ENCODE measurements at regions of chr15 and their contacts with region 1.

Region 1: GRCh38 chr15:65530314-65531122 is at the start of gene HACD3:
- DNase-seq: peak; percentile 77
- ATAC-seq: peak; percentile 81
- H3K4me3 ChIP-seq: peak within 1 kb of the TSS; percentile 95
- H3K27ac ChIP-seq: peak within 1 kb of the TSS; percentile 39; the same call in 1 of the 2 replicates
- H3K4me1 ChIP-seq: peaks cover 25% of the 10 kb centered on the region
- H3K27me3 ChIP-seq: no peaks in the 10 kb centered on the region
- CTCF ChIP-seq: no peak
- total RNA-seq, gene HACD3: 53.0 and 64.9 TPM in 2 replicates

Region 2: DNA sequence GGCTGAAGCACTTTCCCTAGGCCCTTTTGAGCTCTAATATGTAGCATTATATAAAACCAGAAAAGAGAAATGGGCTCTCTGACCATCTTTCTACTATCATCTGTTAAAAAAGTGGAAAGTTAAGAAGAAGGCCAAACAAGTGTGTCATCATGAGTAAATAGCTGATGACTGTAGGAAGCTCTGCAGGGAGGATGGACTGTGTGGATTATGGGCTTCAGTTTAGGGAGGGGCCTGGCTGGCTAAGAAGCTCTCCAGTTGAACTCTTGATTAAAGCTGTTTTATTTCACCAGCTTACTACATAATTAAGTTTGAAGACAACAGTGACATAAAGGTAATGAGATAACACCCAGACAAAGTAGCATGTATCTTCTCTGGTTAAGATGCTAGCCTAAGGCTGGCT is 49.8 kb after region 1 on chr15:
- CTCF ChIA-PET with region 1: no interaction called
- POLR2A ChIA-PET with region 1: no interaction called
- intact Hi-C with region 1: loop called (anchors 5 kb)
- DNase-seq: peak; percentile 68
- ATAC-seq: peak; percentile 93
- H3K4me3 ChIP-seq: no peak overlapping the region
- H3K27ac ChIP-seq: no peak overlapping the region
- H3K4me1 ChIP-seq: peaks cover 26% of the 10 kb centered on the region
- H3K27me3 ChIP-seq: no peaks in the 10 kb centered on the region
- CTCF ChIP-seq: no peak